GM12878 (cell line): ENCODE measurements at regions of chr9 and their contacts with region 1.

Region 1: GRCh38 chr9:137918331-137919094 is 40.9 kb downstream of the CACNA1B start:
- DNase-seq: no peak
- ATAC-seq: no peak
- H3K4me3 ChIP-seq: no peak overlapping the region
- H3K27ac ChIP-seq: no peak overlapping the region
- H3K4me1 ChIP-seq: no peaks in the 10 kb centered on the region
- H3K27me3 ChIP-seq: no peaks in the 10 kb centered on the region
- CTCF ChIP-seq: no peak
- EP300 ChIP-seq: no peak
- POLR2A ChIP-seq: no peak
- RAD21 ChIP-seq: no peak

Region 2: GRCh38 chr9:137907776-137908175 is 10.7 kb before region 1 on chr9:
- CTCF ChIA-PET with region 1: no interaction called
- POLR2A ChIA-PET with region 1: no interaction called
- RAD21 ChIA-PET with region 1: no interaction called
- SMC1A ChIA-PET with region 1: no interaction called
- in situ Hi-C with region 1: no loop called
- intact Hi-C with region 1: no loop called
- DNase-seq: no peak
- ATAC-seq: no peak
- H3K4me3 ChIP-seq: no peak overlapping the region
- H3K27ac ChIP-seq: no peak overlapping the region
- H3K4me1 ChIP-seq: no peaks in the 10 kb centered on the region
- H3K27me3 ChIP-seq: no peaks in the 10 kb centered on the region; a peak in 1 of 4 replicates
- CTCF ChIP-seq: no peak
- EP300 ChIP-seq: no peak
- POLR2A ChIP-seq: no peak
- RAD21 ChIP-seq: no peak

Region 3: GRCh38 chr9:137970505-137971481 is 52.3 kb after region 1 on chr9:
- CTCF ChIA-PET with region 1: no interaction called
- POLR2A ChIA-PET with region 1: no interaction called
- RAD21 ChIA-PET with region 1: no interaction called
- SMC1A ChIA-PET with region 1: no interaction called
- in situ Hi-C with region 1: no loop called
- intact Hi-C with region 1: loop called (anchors 10 kb)
- DNase-seq: no peak
- ATAC-seq: no peak
- H3K4me3 ChIP-seq: no peak overlapping the region
- H3K27ac ChIP-seq: no peak overlapping the region
- H3K4me1 ChIP-seq: no peaks in the 10 kb centered on the region
- H3K27me3 ChIP-seq: no peaks in the 10 kb centered on the region
- CTCF ChIP-seq: no peak
- EP300 ChIP-seq: no peak
- POLR2A ChIP-seq: no peak
- RAD21 ChIP-seq: no peak

Region 4: DNA sequence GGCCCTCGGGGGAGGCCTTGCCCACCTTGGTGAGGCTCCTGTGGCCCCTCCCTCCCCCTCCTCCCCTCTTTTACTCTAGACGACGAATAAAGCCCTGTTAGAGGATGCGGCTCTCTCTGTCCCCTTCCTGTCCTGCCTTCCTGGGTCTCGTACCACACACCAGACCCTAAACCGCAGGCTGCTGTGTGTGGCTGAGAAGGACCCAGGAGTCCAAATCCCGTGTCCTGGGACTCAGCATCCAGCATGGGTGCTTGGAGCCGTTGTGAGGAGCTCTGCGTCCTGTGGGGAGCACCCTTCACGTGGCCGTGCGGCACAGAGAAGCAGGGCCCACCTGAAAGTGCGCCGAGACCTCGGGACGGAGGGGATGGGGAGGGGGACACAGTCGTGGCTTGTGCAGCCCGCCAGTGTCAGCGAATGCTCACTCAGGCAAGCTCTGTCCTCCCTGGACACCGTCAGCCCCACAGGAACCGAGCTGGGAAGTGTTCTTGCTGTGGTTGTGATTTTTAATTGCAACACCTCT is 203.6 kb after region 1 on chr9:
- CTCF ChIA-PET with region 1: no interaction called
- POLR2A ChIA-PET with region 1: no interaction called
- RAD21 ChIA-PET with region 1: no interaction called
- SMC1A ChIA-PET with region 1: no interaction called
- in situ Hi-C with region 1: no loop called
- intact Hi-C with region 1: no loop called
- DNase-seq: no peak
- ATAC-seq: no peak
- H3K4me3 ChIP-seq: no peak overlapping the region
- H3K27ac ChIP-seq: no peak overlapping the region
- H3K4me1 ChIP-seq: no peaks in the 10 kb centered on the region
- H3K27me3 ChIP-seq: no peaks in the 10 kb centered on the region; a peak in 1 of 4 replicates
- CTCF ChIP-seq: no peak
- EP300 ChIP-seq: no peak
- POLR2A ChIP-seq: no peak
- RAD21 ChIP-seq: no peak